Gastrocnemius medialis (tissue), 4 donors: ENCODE measurements at regions of chr20 and their contacts with region 1.

Region 1: DNA sequence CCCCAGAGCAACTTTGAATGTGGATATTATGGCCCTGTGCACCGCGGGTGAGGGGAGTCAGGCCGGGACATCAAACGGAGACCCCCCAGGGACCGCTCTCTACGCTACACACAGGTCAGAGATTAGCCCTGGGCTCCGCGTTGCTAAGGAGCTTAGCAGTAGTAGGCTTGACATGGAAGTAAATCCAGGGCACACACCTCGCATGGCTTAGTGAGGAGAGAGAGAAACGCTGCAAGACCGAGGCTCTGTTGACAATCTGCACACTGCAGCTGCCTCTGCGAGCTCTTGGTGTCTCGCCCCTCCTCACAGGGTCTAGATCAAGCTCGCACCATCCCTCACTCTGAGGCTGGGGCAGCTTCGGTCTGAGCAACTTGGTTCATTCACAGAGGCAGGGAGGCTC is 116.1 kb upstream of the CDH4 start:
- DNase-seq: no peak
- ATAC-seq: no peak
- H3K4me3 ChIP-seq: no peak overlapping the region
- H3K27ac ChIP-seq: no peak overlapping the region
- H3K4me1 ChIP-seq: no peaks in the 10 kb centered on the region
- H3K27me3 ChIP-seq: peaks cover 0 to 25% (median 0%) of the 10 kb centered on the region in 3 donors
- CTCF ChIP-seq: no peak
- POLR2A ChIP-seq: no peak

Region 2: DNA sequence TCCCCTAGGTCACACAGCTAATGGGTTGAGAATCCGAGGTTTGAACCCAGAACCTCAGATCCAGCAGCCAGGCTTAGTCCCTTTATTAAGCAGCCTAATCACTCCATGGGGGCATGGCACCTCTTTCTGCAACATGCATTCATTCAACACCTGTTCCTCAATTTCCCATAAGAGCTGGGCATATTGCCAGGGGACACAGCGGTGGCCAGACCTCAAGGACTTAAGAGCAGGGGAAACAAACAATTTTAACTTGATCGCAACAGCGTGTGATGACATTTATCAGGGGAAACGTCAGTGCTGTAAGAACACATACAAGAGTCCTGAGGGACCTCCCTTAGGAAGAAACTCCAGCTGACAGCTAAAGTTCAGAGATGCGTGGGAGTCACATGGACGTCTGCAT is 151.3 kb before region 1 on chr20:
- in situ Hi-C with region 1: no loop called
- intact Hi-C with region 1: loop called (anchors 5 kb)
- DNase-seq: no peak
- ATAC-seq: peak in 1 of 2 donors; percentile 39
- H3K4me3 ChIP-seq: no peak overlapping the region
- H3K27ac ChIP-seq: no peak overlapping the region
- H3K4me1 ChIP-seq: no peaks in the 10 kb centered on the region
- H3K27me3 ChIP-seq: peaks cover 0 to 3% (median 0%) of the 10 kb centered on the region in 3 donors
- CTCF ChIP-seq: no peak
- POLR2A ChIP-seq: no peak